Activated CD4-positive, alpha-beta memory T cell treated with anti-CD3 and anti-CD28 coated beads, Interleukin-2, amount 10 ng/mL, durations not matched to agents 7 days and 5 days (primary cell): ENCODE measurements at regions of chr1 and their contacts with region 1.

Region 1: GRCh38 chr1:99180343-99180808 is 83.9 kb upstream of the PLPPR4 start:
- DNase-seq: peak; percentile 71
- H3K4me3 Mint-ChIP-seq: no peak overlapping the region
- H3K27ac Mint-ChIP-seq: no peak overlapping the region
- H3K4me1 Mint-ChIP-seq: no peaks in the 10 kb centered on the region
- H3K27me3 Mint-ChIP-seq: peaks cover 3% of the 10 kb centered on the region

Region 2: DNA sequence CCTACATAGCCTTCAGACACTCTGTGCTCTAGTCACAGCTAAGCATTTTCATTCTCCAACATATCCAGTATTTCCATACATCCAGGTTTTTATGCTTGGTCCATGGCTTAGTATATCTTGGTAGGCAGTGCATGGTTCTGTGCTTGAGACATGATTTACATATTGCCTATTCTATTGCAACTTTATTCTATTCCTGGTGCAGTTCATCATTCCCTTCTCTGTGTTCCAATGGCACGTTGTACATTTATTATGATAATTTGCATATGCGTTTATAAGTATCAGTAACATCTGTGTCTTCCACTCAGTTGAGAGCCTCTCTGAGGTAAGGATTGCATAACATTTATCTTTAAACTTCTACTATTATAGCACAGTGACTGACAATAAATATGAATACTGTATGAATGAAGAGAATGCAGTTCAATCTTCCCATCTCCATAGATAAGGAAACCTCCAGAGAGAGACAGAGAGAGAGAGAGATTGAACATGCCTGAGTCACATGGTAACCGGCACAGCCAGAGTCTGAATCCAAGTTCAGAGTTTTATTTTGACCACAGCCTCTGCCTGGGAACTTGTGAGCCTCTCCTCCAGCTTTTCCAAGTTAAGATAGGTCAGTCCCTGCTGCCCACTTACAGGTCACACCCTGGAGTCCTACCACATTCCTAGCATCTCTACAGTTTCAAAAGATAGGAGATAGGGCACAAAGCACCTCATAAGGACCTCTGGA is 217.2 kb before region 1 on chr1:
- CTCF ChIA-PET with region 1: no interaction called
- POLR2A ChIA-PET with region 1: no interaction called
- DNase-seq: no peak
- H3K4me3 Mint-ChIP-seq: no peak overlapping the region
- H3K27ac Mint-ChIP-seq: no peak overlapping the region
- H3K4me1 Mint-ChIP-seq: no peaks in the 10 kb centered on the region
- H3K27me3 Mint-ChIP-seq: no peaks in the 10 kb centered on the region

Region 3: GRCh38 chr1:99481391-99481996 is 301.1 kb after region 1 on chr1:
- CTCF ChIA-PET with region 1: interaction called, 10 read pairs
- POLR2A ChIA-PET with region 1: no interaction called
- DNase-seq: peak; percentile 23
- H3K4me3 Mint-ChIP-seq: no peak overlapping the region
- H3K27ac Mint-ChIP-seq: no peak overlapping the region
- H3K4me1 Mint-ChIP-seq: no peaks in the 10 kb centered on the region
- H3K27me3 Mint-ChIP-seq: peaks cover 14% of the 10 kb centered on the region

Region 4: DNA sequence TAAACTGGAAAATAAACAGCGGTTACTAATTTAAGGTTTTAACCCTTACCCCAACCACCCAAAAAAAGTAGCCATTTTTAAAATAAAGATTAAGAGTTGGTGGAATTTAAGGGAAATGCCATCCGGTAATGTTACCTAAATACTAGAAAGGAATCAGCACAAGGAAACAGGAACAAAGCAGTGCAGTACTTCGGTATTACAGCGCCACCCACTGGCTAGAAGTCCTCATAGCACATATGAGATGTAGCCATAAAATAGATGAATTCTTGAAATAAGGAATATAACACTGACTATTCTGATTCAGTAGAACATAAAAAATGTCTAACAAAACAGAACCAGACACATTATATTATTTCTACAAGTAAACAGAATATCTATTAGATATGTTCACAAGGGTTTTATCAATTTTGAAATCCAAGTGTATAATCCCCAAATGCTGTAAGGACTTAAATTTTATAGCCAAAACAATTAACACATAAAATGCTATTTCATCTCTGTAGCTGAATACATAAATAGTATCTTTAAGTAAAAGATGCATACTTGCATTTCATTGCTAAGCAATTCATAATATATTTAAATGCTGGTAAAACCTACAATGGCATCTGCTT is 527.3 kb after region 1 on chr1:
- CTCF ChIA-PET with region 1: interaction called, 18 read pairs
- POLR2A ChIA-PET with region 1: no interaction called
- DNase-seq: peak; percentile 71
- H3K4me3 Mint-ChIP-seq: no peak overlapping the region
- H3K27ac Mint-ChIP-seq: no peak overlapping the region
- H3K4me1 Mint-ChIP-seq: peaks cover 22% of the 10 kb centered on the region
- H3K27me3 Mint-ChIP-seq: no peaks in the 10 kb centered on the region